ENCODE measurements at regions of chr3 and their contacts with region 1.

Region 1: DNA sequence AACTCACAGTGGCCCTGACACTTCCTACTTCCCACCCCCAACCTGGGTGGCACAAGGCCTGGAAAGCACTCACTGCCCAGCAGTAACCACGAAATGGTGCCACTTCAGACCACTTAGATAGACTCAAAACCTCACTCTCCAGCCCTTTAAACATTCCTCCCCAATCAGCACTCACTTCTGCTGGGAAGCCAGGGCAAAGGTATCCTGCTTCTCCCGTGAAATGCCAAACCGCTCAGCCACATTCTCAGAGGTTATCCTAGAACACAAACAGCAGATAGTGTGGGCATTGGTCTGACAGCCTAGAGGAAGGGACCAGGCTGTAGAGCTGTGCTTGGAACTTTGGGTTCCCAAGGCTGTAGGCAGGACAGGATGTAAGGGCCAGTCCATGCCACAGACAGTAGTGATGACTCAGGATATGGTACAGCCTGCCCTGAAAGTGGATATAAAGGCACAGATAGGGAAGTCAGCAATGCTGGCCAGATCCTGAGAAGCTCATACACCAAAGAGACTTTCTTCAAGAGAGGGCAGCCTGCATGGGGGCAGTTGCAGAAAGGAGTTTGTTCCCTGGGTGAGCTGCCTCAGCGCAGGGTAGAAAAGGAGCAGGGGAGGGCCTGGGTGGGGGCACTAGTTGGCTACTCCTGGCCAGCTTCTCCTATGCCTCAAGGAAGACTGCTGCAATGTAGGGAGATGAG is 9.2 kb downstream of the ACAA1 start:
- DNase-seq: peak in 2 of 9 experiments; percentile 0 to 40
- ATAC-seq: no peak
- H3K4me3 ChIP-seq: no peak overlapping the region
- H3K4me3 Mint-ChIP-seq: no peak overlapping the region
- H3K27ac ChIP-seq: no peak overlapping the region
- H3K27ac Mint-ChIP-seq: peak overlapping the region; percentile 72
- H3K4me1 ChIP-seq: peaks cover 5% of the 10 kb centered on the region
- H3K4me1 Mint-ChIP-seq: peaks cover 12% of the 10 kb centered on the region
- H3K27me3 ChIP-seq: no peaks in the 10 kb centered on the region
- H3K27me3 Mint-ChIP-seq: no peaks in the 10 kb centered on the region
- CTCF ChIP-seq: no peak

Region 2: DNA sequence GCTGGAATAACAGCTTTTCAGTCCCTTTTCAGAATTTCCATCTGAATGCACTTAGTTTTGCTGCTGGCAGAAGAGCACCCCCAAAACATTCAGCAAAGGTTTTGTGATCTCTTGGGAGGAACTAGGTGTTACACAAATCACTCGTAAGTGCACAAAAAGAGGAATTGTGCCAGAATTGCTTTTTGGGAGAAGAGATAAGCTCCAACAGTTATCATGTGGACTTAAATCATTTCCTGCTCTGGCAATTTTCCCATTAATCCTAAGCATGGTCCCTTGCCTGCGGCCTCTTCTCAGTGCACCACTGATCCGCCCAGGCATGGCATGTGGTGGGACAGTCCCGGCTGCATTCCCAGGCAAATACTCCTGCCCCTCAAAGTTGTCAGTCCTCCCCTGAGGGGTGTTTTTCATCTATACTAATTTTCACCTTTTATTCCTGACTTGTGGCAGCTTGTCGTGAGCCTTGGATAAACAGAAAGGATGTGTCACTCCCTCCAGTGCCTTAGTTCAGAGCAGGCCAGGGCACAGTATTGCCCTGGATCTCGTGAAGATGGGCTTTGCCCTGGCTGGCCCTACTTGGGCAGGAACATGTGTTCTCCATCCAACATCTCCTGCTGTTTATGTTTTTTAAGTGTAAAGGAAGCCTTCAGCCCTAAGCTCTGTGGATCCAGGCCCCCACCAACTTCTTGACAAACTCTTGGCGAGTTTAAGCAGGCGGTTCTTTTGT is 181.8 kb before region 1 on chr3:
- CTCF ChIA-PET with region 1: no interaction called
- POLR2A ChIA-PET with region 1: no interaction called
- intact Hi-C with region 1: no loop called
- DNase-seq: no peak
- ATAC-seq: no peak
- H3K4me3 ChIP-seq: no peak overlapping the region
- H3K4me3 Mint-ChIP-seq: no peak overlapping the region
- H3K27ac ChIP-seq: no peak overlapping the region
- H3K27ac Mint-ChIP-seq: no peak overlapping the region
- H3K4me1 ChIP-seq: no peaks in the 10 kb centered on the region
- H3K4me1 Mint-ChIP-seq: no peaks in the 10 kb centered on the region
- H3K27me3 ChIP-seq: no peaks in the 10 kb centered on the region
- H3K27me3 Mint-ChIP-seq: no peaks in the 10 kb centered on the region
- CTCF ChIP-seq: no peak

Region 3: DNA sequence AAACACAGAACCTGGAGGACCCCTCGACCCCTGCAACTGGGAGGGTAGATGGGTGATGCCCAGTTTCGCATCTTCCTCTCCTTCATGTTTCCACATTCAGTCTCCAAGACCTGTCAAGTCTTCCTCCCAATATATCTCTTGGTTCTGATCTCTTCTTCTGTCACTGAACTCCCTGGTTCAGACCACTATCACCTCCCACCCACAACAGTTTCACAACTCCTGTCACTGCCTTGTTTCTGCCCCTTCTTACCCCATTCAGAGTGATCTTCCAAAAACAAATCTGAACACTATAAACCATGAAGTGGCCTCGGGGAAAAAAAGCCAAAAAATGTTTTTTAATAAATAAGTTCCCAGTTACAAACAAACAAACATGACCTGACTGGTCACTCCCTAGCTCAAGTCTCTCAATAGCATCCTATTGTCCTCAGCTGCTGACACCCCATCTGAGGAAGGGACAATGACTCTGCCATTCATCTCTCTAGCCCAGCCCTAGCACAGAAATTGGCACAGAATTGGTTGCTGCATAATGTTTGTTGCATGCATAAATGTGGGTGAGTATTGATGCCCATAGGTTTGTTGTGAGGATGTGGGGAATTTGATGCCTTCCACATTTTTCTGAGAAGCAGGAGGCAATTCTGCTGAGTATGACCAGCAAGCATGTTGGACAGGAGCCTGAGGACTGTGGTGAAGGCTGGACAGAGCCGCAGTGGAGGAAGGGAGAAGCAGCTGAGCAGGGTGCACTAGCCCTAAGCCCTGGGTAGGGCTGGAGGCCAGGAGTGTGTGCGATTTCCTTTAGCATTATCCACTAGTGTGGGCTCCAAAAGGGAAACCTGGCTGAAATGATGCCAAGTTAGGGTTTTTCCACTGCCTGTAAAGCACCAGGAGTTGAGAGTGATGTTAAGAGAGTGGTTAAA is 206.6 kb after region 1 on chr3:
- CTCF ChIA-PET with region 1: no interaction called
- POLR2A ChIA-PET with region 1: no interaction called
- intact Hi-C with region 1: loop called in 1 of 2 experiments (anchors 5 kb)
- DNase-seq: no peak
- ATAC-seq: no peak
- H3K4me3 ChIP-seq: no peak overlapping the region
- H3K4me3 Mint-ChIP-seq: no peak overlapping the region
- H3K27ac ChIP-seq: no peak overlapping the region
- H3K27ac Mint-ChIP-seq: no peak overlapping the region
- H3K4me1 ChIP-seq: no peaks in the 10 kb centered on the region
- H3K4me1 Mint-ChIP-seq: no peaks in the 10 kb centered on the region
- H3K27me3 ChIP-seq: no peaks in the 10 kb centered on the region
- H3K27me3 Mint-ChIP-seq: no peaks in the 10 kb centered on the region
- CTCF ChIP-seq: no peak

Measured in CD8-positive, alpha-beta T cell (primary cell).